Calu3 (cell line): ENCODE measurements at regions of chr22 and their contacts with region 1.

Region 1: DNA sequence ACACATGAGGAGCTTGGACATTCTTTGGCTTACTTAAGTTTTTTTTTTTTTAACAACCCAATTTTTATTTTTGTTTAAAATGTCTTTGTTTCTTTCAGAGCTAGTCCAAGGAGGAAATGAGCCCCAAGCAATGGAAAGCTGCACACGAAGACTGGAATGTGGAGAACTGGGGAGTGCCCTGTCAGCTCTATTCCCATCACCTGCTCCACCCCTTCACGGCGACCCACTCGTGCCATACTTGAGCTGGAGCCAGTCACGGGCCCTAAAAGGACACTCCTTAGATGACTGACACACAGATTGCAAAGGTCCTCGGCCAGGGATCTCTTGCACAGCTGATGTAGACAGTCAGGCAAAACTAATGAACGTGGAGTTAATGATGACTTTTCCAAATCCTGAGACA is 10.6 kb upstream of the SLC25A18 start:
- DNase-seq: no peak
- H3K4me3 Mint-ChIP-seq: no peak overlapping the region
- H3K27ac Mint-ChIP-seq: no peak overlapping the region
- H3K4me1 Mint-ChIP-seq: peaks cover 1% of the 10 kb centered on the region
- H3K27me3 Mint-ChIP-seq: peaks cover 65% of the 10 kb centered on the region
- CTCF ChIP-seq: no peak

Region 2: GRCh38 chr22:17606496-17606895 is 53.8 kb after region 1 on chr22:
- CTCF ChIA-PET with region 1: no interaction called
- intact Hi-C with region 1: loop called (anchors 10 kb)
- DNase-seq: no peak
- H3K4me3 Mint-ChIP-seq: no peak overlapping the region
- H3K27ac Mint-ChIP-seq: no peak overlapping the region
- H3K4me1 Mint-ChIP-seq: no peaks in the 10 kb centered on the region
- H3K27me3 Mint-ChIP-seq: no peaks in the 10 kb centered on the region
- CTCF ChIP-seq: no peak

Region 3: DNA sequence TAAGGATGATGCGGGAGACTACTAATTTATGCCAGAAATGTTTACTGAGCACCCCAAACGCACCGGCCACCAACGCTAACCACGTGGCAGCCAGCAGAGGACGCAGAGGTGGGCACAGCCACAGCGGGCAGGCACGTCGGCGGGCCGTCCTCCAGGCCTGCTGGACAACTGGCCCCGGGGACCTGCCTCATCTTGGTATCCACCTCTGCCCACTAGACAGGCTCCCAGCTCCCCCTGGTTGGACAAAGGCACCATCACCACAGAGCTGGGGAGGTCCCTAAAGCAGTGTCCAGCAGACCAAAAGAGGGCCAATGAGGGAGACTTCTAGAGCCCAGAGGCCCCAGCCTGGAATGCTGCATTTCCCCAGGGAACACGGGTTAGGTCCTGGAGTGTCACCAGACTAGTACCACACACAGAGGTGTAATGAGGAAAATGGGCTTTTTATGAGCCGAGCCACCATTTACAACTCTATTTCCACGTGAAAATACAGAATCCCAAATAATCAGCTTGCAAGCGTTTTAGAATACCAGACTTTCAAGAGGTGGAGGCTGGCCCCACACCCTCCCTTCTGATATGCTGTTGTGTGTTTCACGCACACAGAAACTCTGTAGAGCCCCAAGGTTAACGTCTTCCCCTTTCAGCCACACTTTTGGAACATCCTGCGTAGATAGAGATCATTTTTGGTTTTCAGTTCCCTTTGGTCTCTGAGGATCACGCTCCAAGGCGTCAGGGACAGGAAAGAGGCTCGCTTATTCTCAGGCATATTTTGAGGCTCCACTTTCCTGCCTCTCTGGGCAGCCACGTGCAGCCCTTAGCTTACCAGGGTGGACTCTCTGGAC is 245.2 kb after region 1 on chr22:
- CTCF ChIA-PET with region 1: no interaction called
- intact Hi-C with region 1: no loop called
- DNase-seq: no peak
- H3K4me3 Mint-ChIP-seq: no peak overlapping the region
- H3K27ac Mint-ChIP-seq: no peak overlapping the region
- H3K4me1 Mint-ChIP-seq: no peaks in the 10 kb centered on the region
- H3K27me3 Mint-ChIP-seq: no peaks in the 10 kb centered on the region
- CTCF ChIP-seq: no peak